Dorsolateral prefrontal cortex (tissue), 120 donors: ENCODE measurements at regions of chr4 and their contacts with region 1.

Region 1: GRCh38 chr4:166165829-166166420 is 292.9 kb downstream of the TLL1 start:
- DNase-seq: peak in 2 of 10 donors; percentile 17 to 23
- H3K4me3 ChIP-seq: peak overlapping the region in 6 of 59 donors; percentile 1 to 26 (median 17)
- H3K27ac ChIP-seq: no peak overlapping the region
- H3K27me3 ChIP-seq: peaks cover 0 to 4% (median 0%) of the 10 kb centered on the region in 45 donors
- CTCF ChIP-seq: peak; percentile 67 to 95 (median 84)

Region 2: DNA sequence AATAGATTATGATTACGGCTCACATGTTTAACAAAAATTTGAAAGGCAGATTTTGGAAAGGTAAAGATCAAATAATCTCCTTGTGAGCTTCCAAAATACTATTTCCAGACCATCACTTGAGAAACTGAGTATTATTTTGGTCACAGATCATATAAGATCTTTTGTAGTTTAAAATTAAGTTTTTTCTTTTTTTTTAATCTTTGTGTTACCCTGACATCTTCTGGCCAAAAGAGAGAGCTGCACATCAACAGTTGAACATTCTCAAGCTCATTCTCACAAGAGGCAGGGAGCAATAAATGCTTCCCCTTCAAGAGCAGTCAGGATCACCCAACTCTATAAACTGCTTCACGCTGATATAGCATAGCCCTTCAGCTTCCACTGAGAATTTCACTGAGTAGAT is 1069.1 kb before region 1 on chr4:
- intact Hi-C with region 1: no loop called
- DNase-seq: no peak
- H3K4me3 ChIP-seq: no peak overlapping the region
- H3K27ac ChIP-seq: no peak overlapping the region
- H3K27me3 ChIP-seq: no peaks in the 10 kb centered on the region
- CTCF ChIP-seq: peak in 55 of 56 donors; percentile 28 to 77 (median 62)

Region 3: GRCh38 chr4:166239354-166239753 is 73.4 kb after region 1 on chr4:
- intact Hi-C with region 1: no loop called
- DNase-seq: no peak
- H3K4me3 ChIP-seq: no peak overlapping the region
- H3K27ac ChIP-seq: no peak overlapping the region
- H3K27me3 ChIP-seq: no peaks in the 10 kb centered on the region
- CTCF ChIP-seq: no peak

Region 4: GRCh38 chr4:166594326-166594946 is 428.5 kb after region 1 on chr4:
- intact Hi-C with region 1: loop called in 1 of 2 experiments (anchors 5 kb)
- DNase-seq: peak in 2 of 10 donors; percentile 26 to 43
- H3K4me3 ChIP-seq: no peak overlapping the region
- H3K27ac ChIP-seq: no peak overlapping the region
- H3K27me3 ChIP-seq: no peaks in the 10 kb centered on the region
- CTCF ChIP-seq: peak in 28 of 56 donors; percentile 15 to 56 (median 34)

Region 5: DNA sequence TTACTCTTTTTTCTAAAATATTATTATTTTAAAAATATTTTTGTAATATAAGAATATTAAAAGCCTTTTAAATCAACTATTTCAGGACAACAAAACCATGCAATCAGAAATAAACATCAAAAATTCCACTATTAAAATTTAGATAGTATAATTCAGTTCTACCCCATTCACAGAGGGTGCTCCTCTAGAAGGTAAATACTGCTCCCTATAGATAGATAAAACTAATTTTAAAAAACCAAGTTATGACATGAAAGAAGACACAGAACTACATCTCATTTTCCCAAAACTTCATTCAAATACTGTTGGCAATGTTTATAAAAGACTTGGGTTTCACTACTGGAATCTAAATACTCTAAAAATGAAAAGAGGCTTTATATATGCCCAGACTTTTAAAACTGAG is 849.0 kb after region 1 on chr4:
- intact Hi-C with region 1: loop called in 1 of 2 experiments (anchors 5 kb)
- DNase-seq: no peak
- H3K4me3 ChIP-seq: no peak overlapping the region
- H3K27ac ChIP-seq: peak overlapping the region in 3 of 59 donors; percentile 18 to 54 (median 26)
- H3K27me3 ChIP-seq: no peaks in the 10 kb centered on the region
- CTCF ChIP-seq: peak in 21 of 56 donors; percentile 8 to 50 (median 27)

Region 6: DNA sequence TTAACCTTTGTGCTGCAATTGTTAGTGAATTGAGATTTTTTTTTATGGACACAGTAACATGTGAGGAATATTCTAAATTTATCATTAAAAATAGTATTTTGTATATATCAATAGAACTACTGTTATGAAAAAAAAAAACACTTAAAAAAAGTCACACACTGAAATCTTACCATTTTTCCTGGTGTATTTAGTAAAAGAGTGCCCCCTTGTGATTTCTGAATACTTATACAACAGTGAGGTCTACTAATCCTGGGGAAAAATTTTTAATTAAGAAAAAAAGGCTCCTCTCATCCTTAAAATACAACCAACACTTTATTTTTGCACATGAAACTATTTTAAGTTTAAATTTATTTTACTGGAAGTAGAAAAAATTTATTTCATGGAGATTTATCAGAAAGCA is 1124.8 kb after region 1 on chr4:
- intact Hi-C with region 1: loop called in 1 of 2 experiments (anchors 5 kb)
- DNase-seq: no peak
- H3K4me3 ChIP-seq: no peak overlapping the region
- H3K27ac ChIP-seq: peak overlapping the region in 12 of 59 donors; percentile 4 to 73 (median 32)
- H3K27me3 ChIP-seq: no peaks in the 10 kb centered on the region
- CTCF ChIP-seq: peak; percentile 38 to 87 (median 70)

Region 7: GRCh38 chr4:167622481-167623246 is 1456.7 kb after region 1 on chr4:
- intact Hi-C with region 1: loop called in 1 of 2 experiments (anchors 5 kb)
- DNase-seq: peak; percentile 12 to 81 (median 67)
- H3K4me3 ChIP-seq: no peak overlapping the region
- H3K27ac ChIP-seq: no peak overlapping the region
- H3K27me3 ChIP-seq: no peaks in the 10 kb centered on the region
- CTCF ChIP-seq: peak in 55 of 56 donors; percentile 60 to 91 (median 80)

Region 8: DNA sequence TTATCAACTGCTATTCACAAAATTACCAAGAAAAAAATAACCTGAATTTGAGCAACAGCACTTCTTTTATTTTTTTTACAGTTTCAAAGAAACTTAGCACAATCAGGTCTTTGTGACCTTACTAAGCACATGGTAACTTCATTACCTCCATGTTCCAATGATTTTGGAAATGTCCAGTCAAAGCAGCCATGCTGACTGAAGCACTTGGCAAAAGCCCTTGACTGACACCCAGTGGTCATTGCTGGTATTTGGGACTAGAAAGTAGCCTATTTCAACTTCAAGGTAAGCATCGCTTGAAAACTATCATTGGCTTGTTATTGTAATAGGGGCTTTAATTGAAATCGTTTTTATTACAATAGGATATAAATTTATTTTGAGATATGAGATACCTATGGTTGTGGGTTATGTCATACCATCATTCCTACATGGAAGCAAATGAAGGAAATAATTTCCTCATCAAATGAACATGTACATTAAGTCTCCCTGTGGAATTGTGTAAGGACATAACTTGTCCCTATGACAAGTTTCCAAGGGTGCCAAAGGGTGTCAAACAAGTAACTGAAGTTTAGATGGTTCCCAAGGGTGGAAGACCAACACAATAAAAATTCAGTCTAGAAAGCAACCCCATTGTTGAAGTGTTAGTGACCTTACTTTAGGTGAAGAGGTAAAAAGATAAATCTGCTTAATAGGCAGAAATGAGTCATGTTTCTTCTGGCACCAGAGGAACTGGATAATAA is 1911.2 kb after region 1 on chr4:
- intact Hi-C with region 1: loop called (anchors 5 to 10 kb)
- DNase-seq: peak in 9 of 10 donors; percentile 19 to 73 (median 47)
- H3K4me3 ChIP-seq: no peak overlapping the region
- H3K27ac ChIP-seq: no peak overlapping the region
- H3K27me3 ChIP-seq: no peaks in the 10 kb centered on the region
- CTCF ChIP-seq: peak; percentile 63 to 94 (median 82)

Region 9: DNA sequence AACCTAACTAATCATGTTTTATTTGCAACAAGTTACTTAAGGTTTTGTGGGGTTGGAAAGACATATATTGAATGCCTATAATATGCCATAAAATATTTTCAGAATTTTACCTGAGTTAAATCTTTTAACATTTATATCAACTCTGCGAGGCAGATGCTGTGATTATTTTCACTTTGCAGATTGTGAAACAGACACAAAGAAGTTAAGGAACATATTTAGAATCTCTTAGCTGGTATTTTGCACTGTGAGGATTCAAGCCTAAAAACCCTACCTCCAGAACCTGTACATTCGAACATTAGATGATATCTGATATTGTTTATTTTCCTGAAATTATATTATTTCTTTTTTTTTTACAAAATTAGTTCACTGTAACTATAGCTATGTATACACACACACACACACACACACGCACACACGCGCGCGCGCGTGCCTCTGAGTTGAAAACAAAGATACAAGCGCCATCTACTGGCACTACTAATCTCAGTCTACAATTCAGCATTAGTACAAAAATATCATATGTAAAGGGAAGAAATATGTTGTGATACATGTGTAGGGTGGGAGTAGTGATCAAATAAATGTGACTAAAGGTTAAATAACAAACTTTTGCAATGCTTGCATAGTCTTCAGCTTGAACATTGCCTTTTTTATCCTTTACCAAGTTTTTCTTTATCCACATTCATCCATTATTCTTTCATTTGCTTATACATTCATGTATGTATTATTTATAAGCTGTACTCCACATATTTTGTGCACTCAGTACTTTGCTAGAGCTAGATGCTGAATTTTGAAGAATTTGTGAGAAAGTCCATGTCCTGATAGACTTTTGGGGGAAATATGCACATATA is 1987.9 kb after region 1 on chr4:
- intact Hi-C with region 1: loop called (anchors 5 kb)
- DNase-seq: peak in 9 of 10 donors; percentile 8 to 85 (median 66)
- H3K4me3 ChIP-seq: peak overlapping the region in 46 of 59 donors; percentile 3 to 53 (median 31)
- H3K27ac ChIP-seq: no peak overlapping the region
- H3K27me3 ChIP-seq: peaks cover 0 to 5% (median 0%) of the 10 kb centered on the region in 45 donors
- CTCF ChIP-seq: peak; percentile 30 to 84 (median 67)